ENCODE measurements at regions of chr2 and their contacts with region 1.

Region 1: GRCh38 chr2:56183643-56184499 is at the start of gene CCDC85A:
- DNase-seq: no peak
- H3K4me3 ChIP-seq: peak within 1 kb of the TSS; percentile 76
- CTCF ChIP-seq: peak; percentile 94

Region 2: GRCh38 chr2:56121995-56122394 is 61.9 kb before region 1 on chr2:
- CTCF ChIA-PET with region 1: no interaction called
- POLR2A ChIA-PET with region 1: no interaction called
- DNase-seq: no peak
- H3K4me3 ChIP-seq: no peak overlapping the region
- CTCF ChIP-seq: no peak

Region 3: GRCh38 chr2:56170504-56170903 is 13.4 kb before region 1 on chr2:
- CTCF ChIA-PET with region 1: interaction called, 12 read pairs
- POLR2A ChIA-PET with region 1: no interaction called
- DNase-seq: no peak
- H3K4me3 ChIP-seq: no peak overlapping the region
- CTCF ChIP-seq: no peak

Region 4: DNA sequence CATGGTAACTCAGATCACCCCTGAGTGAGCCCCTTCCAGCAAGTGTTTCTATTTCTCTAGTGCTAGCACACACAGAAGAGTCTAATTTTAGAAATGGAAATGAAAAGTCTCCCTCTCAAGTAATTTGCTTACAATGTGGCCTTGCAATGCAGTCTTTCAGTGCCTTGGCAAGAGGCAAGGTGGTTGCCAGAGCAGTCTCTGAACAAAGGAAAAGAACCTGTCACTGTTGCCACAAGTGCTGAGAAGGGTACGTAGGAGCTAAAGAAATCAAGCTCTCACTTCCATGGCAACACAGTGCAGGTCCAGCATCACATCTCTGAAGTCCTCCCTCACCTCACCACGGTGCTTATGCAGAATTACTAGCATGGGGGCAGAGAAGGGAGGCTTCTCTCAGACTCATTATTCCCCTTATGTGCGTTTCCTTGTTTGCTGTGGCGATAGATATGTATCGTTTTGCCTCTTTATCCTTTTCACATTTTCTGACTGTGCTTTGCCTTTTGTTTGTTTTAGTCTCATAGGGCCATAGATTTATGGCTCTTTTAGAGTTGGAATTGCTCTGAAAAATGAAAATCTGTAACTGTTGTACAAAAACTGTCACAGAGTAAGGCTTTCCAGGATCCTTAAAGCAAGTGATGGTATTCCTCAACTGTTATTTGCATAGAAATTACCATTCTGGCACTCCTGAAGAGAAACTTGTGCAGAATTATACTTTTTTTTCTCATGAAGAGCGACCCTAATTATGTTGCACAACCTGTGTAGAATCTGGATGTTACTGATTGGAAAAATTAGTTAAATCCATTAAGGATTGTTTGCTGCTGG is 164.7 kb after region 1 on chr2:
- CTCF ChIA-PET with region 1: no interaction called
- POLR2A ChIA-PET with region 1: no interaction called
- DNase-seq: no peak
- H3K4me3 ChIP-seq: no peak overlapping the region
- CTCF ChIP-seq: no peak

Region 5: DNA sequence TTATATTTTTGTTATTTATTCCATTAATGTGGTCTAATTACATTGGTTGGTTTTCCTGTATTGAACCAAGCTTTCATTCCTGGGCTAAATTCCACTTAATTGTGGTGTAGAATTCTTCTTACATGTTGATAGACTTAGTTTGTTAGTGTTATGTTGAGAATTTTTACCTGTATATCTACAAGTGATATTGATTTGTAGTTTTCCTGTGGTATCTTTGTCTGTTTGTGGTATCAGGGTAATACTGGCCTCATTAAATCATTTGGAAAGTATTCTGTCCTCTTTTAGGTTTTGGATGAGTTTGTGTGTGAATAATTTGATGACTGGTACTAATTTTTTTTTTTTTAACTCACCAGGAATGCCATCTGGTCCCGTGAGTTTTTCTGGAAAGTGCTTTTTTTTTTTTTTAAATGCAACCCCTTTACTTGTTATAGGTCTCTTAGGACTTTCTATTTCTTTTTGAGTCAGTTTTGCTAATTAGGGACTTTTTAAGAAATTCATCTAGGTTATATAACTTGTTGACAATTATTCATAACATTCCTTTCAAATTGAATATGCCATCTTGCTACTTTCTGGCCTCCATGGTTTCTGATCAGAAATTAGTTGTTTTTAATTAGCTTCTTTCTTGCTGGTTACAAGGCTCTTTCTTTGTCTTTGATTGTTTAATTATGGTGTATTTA is 232.8 kb after region 1 on chr2:
- CTCF ChIA-PET with region 1: no interaction called
- POLR2A ChIA-PET with region 1: no interaction called
- DNase-seq: no peak
- H3K4me3 ChIP-seq: no peak overlapping the region
- CTCF ChIP-seq: no peak

Region 6: DNA sequence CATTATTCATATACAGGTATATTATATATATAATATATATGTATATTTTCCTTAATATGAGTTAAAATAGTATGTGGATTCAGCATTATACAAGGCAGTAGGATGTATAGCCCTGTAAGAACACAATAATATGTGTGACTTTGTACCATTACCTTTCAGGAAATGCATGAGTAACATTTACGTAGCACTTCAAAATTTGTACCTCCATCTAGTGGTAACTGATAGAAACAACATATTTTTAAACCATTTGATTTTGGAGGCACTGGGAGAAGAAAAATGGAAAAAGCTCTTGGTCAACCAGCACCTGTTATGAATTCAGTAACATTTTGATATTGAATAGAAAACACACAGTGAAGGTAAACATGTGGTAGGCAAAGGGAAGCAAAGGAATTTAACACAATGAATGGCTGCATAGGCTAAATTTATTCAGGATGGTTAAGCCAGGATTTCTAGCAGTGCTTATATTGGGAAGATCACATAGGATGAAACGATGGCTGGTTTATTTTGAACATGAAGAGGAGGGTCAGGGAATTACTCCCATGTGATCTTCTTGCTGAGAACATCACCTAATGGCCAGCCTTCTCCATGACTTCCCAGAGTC is 565.4 kb after region 1 on chr2:
- CTCF ChIA-PET with region 1: interaction called, 27 read pairs
- POLR2A ChIA-PET with region 1: no interaction called
- DNase-seq: peak; percentile 21
- H3K4me3 ChIP-seq: no peak overlapping the region
- CTCF ChIP-seq: peak; percentile 22

Region 7: GRCh38 chr2:57497489-57498096 is 1313.7 kb after region 1 on chr2:
- CTCF ChIA-PET with region 1: interaction called, 78 read pairs
- POLR2A ChIA-PET with region 1: no interaction called
- DNase-seq: peak; percentile 4
- H3K4me3 ChIP-seq: no peak overlapping the region
- CTCF ChIP-seq: peak; percentile 78

Region 8: DNA sequence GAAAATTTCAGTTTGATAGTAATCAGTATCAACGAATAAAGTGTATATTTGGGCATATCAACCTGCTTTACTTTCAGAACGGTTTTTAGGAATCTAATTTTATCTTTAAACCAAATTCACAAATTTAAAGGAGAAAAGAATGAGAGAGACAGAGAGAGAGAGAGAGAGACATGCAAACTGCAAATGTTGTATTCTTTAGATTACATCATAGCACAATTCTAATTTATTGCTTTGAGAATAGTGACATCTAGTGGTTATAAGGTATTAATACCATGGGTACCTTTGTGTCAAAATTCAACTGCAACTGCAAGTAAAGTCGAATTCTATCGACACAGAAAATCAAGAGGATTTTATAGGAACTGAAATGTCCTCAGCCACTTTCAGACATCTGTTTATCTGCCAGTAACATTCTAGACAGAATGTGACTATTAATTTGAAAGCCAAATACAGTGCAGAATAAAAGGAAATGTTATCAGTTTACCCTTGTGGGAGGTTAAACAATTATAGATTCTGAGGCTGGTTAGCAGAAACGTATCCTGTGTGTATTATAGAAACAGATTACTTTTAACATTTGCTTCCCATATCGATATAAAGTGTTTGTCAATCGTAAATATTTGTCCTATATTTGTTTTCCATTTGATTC is 1332.9 kb after region 1 on chr2:
- CTCF ChIA-PET with region 1: interaction called, 17 read pairs
- POLR2A ChIA-PET with region 1: no interaction called
- DNase-seq: peak; percentile 5
- H3K4me3 ChIP-seq: no peak overlapping the region
- CTCF ChIP-seq: no peak

Measured in AG04449 (cell line).